ENCODE measurements at regions of chr4 and their contacts with region 1.

Region 1: DNA sequence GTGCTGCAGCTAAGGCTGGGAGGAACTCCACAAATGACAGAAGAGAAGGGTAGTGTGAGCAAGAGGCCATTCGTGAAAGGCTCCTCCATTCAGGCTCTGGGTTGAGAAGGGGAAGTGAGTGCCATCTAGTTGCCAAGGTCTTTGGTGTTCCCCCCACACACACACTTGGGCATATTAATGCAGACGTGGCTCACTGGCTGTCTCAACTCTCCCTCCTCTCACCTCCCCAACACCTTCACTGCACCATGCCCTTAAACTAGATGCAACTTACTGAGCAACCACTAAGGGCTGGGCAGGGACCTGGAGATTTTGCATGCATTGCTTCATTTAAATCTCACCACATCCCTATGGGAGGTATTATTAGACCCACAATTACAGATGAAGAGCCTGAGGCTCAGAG is 8.7 kb downstream of the CLRN2 start:
- DNase-seq: no peak
- ATAC-seq: no peak
- H3K4me3 ChIP-seq: no peak overlapping the region
- H3K27ac ChIP-seq: no peak overlapping the region
- H3K4me1 ChIP-seq: no peaks in the 10 kb centered on the region
- H3K27me3 ChIP-seq: peaks cover 0 to 33% (median 6%) of the 10 kb centered on the region in 7 donors
- CTCF ChIP-seq: no peak

Region 2: GRCh38 chr4:15674926-15675325 is 1848.7 kb before region 1 on chr4:
- intact Hi-C with region 1: loop called in 1 of 10 experiments (anchors 5 kb)
- DNase-seq: no peak
- ATAC-seq: no peak
- H3K4me3 ChIP-seq: no peak overlapping the region
- H3K27ac ChIP-seq: peak overlapping the region in 1 of 10 donors; percentile 45
- H3K4me1 ChIP-seq: peaks cover 0 to 30% (median 0%) of the 10 kb centered on the region in 9 donors
- H3K27me3 ChIP-seq: no peaks in the 10 kb centered on the region
- CTCF ChIP-seq: no peak

Region 3: DNA sequence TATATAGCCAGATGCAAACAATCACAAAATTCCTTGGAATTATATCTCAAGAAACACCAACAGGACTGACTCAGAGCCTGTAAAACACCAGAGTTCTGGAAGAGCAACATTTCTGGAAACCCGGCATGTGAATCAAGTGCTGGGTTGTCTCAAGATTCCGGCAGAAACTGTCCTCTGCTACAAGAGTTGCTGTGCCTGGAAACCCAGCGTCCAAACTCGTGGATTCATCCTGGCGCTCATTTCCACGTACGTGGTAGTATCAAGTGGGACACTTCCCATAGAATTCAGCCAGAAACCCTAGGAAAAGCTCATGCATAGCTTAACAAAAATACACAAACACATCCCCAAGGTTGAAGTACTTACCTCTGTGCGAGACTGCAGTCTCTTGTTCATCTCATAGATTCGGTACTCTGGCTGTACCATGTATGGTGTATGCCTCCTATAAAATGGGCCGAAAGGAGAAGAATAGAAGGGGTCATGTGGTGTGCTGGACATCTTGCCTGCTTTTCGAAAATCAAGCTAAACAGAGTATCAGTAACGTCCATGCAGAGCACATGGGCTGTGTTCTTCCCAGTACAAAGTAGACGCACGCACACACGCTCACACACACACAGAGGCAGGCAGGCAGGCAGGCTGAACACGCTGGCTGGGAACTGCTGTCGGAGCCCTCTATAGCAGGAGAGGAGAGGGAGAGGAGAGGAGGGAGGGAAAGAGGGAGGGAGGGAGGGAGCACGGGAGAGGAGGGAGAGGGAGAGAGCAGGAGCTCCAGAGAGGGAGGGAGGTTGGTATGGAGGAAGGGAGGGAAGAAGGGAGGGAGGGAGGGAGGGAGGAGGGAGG is 625.5 kb before region 1 on chr4 and contains the start of gene LDB2:
- intact Hi-C with region 1: no loop called
- DNase-seq: peak; percentile 65 to 83
- ATAC-seq: peak; percentile 83 to 94 (median 90)
- H3K4me3 ChIP-seq: peak within 1 kb of the TSS; percentile 37 to 69 (median 60)
- H3K27ac ChIP-seq: peak within 1 kb of the TSS; percentile 53 to 86 (median 80)
- H3K4me1 ChIP-seq: peaks cover 0 to 24% (median 9%) of the 10 kb centered on the region in 9 donors
- H3K27me3 ChIP-seq: no peaks in the 10 kb centered on the region
- CTCF ChIP-seq: no peak
- total RNA-seq, gene LDB2: 14.5 to 43.3 (median 23.5) TPM

Region 4: DNA sequence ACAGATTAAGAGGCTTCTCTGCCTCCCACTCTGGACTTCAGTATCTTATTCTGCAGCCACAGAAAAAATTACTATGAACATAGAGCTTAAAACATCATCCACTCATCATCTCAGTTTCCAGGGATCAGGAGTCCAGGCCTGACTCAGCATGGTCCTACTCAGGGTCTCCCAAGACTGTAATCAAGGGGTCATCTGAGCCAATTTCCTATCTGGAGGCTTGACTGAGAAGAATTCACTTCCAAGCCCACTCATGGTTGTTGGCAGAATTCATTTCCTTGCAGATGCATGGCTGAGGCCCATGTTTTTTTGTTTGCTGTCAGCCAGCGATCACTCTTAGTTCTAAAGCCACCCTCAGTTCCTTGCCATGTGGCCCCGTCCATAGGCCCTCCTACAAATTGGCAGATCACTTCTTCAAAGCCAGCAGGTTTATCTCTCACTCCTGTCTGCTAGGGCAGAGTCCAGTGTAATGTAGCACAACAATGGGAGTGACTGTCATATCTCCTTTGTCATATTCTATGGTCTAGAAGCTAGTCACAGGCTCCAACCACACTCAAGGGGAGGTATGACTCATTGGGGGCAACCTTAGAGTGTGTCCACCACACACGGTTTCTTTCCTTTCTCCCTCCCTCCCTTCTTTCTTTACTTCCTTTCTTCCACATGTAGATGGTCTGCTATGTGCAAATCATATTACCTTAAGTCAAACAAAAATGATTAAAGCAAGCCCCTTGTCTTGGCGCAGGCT is 263.3 kb before region 1 on chr4:
- intact Hi-C with region 1: no loop called
- DNase-seq: no peak
- ATAC-seq: no peak
- H3K4me3 ChIP-seq: no peak overlapping the region
- H3K27ac ChIP-seq: no peak overlapping the region
- H3K4me1 ChIP-seq: no peaks in the 10 kb centered on the region
- H3K27me3 ChIP-seq: no peaks in the 10 kb centered on the region
- CTCF ChIP-seq: no peak

Region 5: GRCh38 chr4:17400686-17401085 is 123.0 kb before region 1 on chr4:
- intact Hi-C with region 1: no loop called
- DNase-seq: no peak
- ATAC-seq: no peak
- H3K4me3 ChIP-seq: no peak overlapping the region
- H3K27ac ChIP-seq: no peak overlapping the region
- H3K4me1 ChIP-seq: no peaks in the 10 kb centered on the region
- H3K27me3 ChIP-seq: no peaks in the 10 kb centered on the region
- CTCF ChIP-seq: no peak